Naive thymus-derived CD4-positive, alpha-beta T cell (primary cell): ENCODE measurements at regions of chr19 and their contacts with region 1.

Region 1: DNA sequence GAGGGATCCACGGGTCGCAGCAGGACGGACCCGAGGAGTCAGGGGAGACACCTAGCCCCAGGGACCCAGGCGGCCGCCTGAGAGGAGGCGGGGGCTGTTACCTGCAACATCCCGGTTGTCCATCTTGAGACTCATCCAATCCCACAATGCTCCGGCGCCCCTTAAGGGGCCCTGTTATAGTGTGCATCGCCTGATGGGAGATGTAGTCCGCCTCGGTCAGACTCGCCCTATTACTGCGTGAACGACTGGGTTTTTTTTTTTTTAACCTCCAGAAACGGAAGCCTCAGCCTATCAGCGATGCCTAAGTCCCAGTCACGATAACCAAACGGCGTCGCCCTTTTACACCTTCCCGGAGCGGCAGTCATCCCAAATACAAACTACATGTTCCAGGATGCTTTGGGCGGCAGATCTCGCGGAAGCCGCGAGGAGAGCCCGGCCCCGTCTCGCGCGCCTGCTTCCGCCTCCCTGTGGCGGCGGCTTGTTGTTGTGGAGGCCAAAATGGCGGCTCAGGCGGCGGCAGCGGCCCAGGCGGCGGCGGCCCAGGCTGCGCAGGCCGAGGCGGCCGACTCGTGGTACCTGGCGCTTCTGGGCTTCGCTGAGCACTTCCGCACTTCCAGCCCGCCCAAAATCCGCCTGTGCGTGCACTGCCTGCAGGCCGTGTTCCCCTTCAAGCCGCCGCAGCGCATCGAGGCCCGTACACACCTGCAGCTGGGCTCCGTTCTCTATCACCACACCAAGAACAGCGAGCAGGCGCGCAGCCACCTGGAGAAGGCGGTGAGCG is at the starts of genes MAU2 and SUGP1:
- DNase-seq: peak; percentile 78 to 94 (median 91)
- ATAC-seq: peak; percentile 94
- H3K4me3 ChIP-seq: peak within 1 kb of the TSS; percentile 89
- H3K4me3 Mint-ChIP-seq: peak within 1 kb of the TSS; percentile 93 to 100 (median 98)
- H3K27ac ChIP-seq: peak within 1 kb of the TSS; percentile 95
- H3K27ac Mint-ChIP-seq: peak within 1 kb of the TSS; percentile 96 to 100 (median 99)
- H3K4me1 ChIP-seq: peaks cover 23 to 30% of the 10 kb centered on the region in 2 donors
- H3K4me1 Mint-ChIP-seq: peaks cover 20 to 66% (median 44%) of the 10 kb centered on the region in 7 donors
- H3K27me3 ChIP-seq: no peaks in the 10 kb centered on the region
- H3K27me3 Mint-ChIP-seq: no peaks in the 10 kb centered on the region
- total RNA-seq, gene MAU2: 93.7 to 170 (median 136) TPM
- total RNA-seq, gene SUGP1: 59.7 to 96.6 (median 77.5) TPM

Region 2: GRCh38 chr19:19138169-19138981 is 182.2 kb before region 1 on chr19 and contains the start of gene TMEM161A:
- CTCF ChIA-PET with region 1: interaction called, 3 read pairs
- POLR2A ChIA-PET with region 1: no interaction called
- intact Hi-C with region 1: loop called (anchors 1 kb)
- DNase-seq: peak; percentile 84 to 96 (median 93)
- ATAC-seq: peak; percentile 100
- H3K4me3 ChIP-seq: peak within 1 kb of the TSS; percentile 84
- H3K4me3 Mint-ChIP-seq: peak within 1 kb of the TSS; percentile 83 to 100 (median 98)
- H3K27ac ChIP-seq: peak within 1 kb of the TSS; percentile 90
- H3K27ac Mint-ChIP-seq: peak within 1 kb of the TSS; percentile 84 to 97 (median 94)
- H3K4me1 ChIP-seq: peaks cover 8 to 9% of the 10 kb centered on the region in 2 donors
- H3K4me1 Mint-ChIP-seq: peaks cover 20 to 41% (median 29%) of the 10 kb centered on the region in 7 donors
- H3K27me3 ChIP-seq: no peaks in the 10 kb centered on the region
- H3K27me3 Mint-ChIP-seq: no peaks in the 10 kb centered on the region
- total RNA-seq, gene TMEM161A: 15.8 to 32.7 (median 23.5) TPM

Region 3: DNA sequence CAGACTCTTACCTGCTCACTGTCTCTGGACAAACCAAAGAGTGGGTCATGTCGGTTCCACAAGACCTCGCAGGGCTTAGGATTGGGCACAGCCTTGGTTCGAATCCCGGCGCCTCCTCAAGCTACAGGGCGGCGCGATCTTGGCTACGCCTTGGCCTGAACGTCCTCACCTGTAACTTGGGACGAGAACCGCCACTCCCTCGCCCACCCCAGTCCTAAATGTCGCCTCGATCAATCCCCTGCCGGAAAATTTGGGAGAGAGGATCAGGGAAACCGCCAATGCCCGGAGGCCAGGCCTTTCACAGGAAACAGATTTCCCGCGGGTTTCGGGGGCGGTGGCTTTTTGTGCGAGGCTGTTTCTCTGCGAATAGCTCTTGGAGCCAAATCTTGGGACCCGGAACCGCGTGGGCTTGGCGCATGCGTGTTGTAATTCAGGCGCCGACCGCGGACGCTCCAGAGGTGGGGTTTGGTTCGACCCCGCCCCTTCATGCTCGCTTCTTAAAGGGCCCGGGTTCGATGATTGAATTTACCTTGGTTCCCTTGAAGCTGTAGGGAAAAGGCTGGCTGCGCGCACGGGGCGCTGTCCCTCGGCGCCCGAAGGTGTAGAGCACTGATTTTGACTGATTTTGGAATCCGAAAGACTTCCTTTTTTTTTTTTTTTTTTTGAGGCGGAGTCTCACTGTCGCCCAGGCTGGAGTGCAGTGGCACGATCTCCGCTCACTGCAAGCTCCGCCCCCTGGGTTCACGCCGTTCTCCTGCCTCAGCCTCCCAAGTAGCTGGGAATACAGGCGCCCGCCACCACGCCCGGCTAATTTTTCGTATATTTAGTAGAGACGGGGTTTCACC is 117.3 kb before region 1 on chr19 and contains the start of gene NR2C2AP:
- CTCF ChIA-PET with region 1: no interaction called
- POLR2A ChIA-PET with region 1: no interaction called
- intact Hi-C with region 1: loop called (anchors 1 kb)
- DNase-seq: peak; percentile 80 to 94 (median 89)
- ATAC-seq: peak; percentile 95
- H3K4me3 ChIP-seq: peak within 1 kb of the TSS; percentile 95
- H3K4me3 Mint-ChIP-seq: peak within 1 kb of the TSS; percentile 90 to 94 (median 92)
- H3K27ac ChIP-seq: peak within 1 kb of the TSS; percentile 89
- H3K27ac Mint-ChIP-seq: peak within 1 kb of the TSS; percentile 88 to 96 (median 93)
- H3K4me1 ChIP-seq: peaks cover 23% of the 10 kb centered on the region in 2 donors
- H3K4me1 Mint-ChIP-seq: peaks cover 22 to 36% (median 30%) of the 10 kb centered on the region in 7 donors
- H3K27me3 ChIP-seq: no peaks in the 10 kb centered on the region
- H3K27me3 Mint-ChIP-seq: peaks cover 0 to 12% (median 0%) of the 10 kb centered on the region in 5 donors
- total RNA-seq, gene NR2C2AP: 13.8 to 33.4 (median 28.7) TPM

Region 4: GRCh38 chr19:19385108-19385899 is 64.8 kb after region 1 on chr19:
- CTCF ChIA-PET with region 1: no interaction called
- POLR2A ChIA-PET with region 1: no interaction called
- intact Hi-C with region 1: loop called (anchors 1 kb)
- DNase-seq: peak; percentile 95 to 100 (median 99)
- ATAC-seq: peak; percentile 93
- H3K4me3 ChIP-seq: peak overlapping the region; percentile 81
- H3K4me3 Mint-ChIP-seq: peak overlapping the region; percentile 89 to 99 (median 94)
- H3K27ac ChIP-seq: peak overlapping the region; percentile 88
- H3K27ac Mint-ChIP-seq: peak overlapping the region; percentile 25 to 96 (median 93)
- H3K4me1 ChIP-seq: peaks cover 29 to 42% of the 10 kb centered on the region in 2 donors
- H3K4me1 Mint-ChIP-seq: peaks cover 36 to 46% (median 42%) of the 10 kb centered on the region in 7 donors
- H3K27me3 ChIP-seq: no peaks in the 10 kb centered on the region
- H3K27me3 Mint-ChIP-seq: no peaks in the 10 kb centered on the region

Region 5: GRCh38 chr19:19459707-19460251 is 139.2 kb after region 1 on chr19:
- CTCF ChIA-PET with region 1: no interaction called
- POLR2A ChIA-PET with region 1: interaction called, 3 read pairs
- intact Hi-C with region 1: loop called in 1 of 2 experiments (anchors 1 kb)
- DNase-seq: peak in 8 of 9 donors; percentile 49 to 75 (median 61)
- ATAC-seq: peak; percentile 72
- H3K4me3 ChIP-seq: peak overlapping the region; percentile 55
- H3K4me3 Mint-ChIP-seq: peak overlapping the region; percentile 85 to 92 (median 91)
- H3K27ac ChIP-seq: peak overlapping the region; percentile 82
- H3K27ac Mint-ChIP-seq: peak overlapping the region; percentile 94 to 99 (median 98)
- H3K4me1 ChIP-seq: peaks cover 82% of the 10 kb centered on the region in 2 donors
- H3K4me1 Mint-ChIP-seq: peaks cover 63 to 84% (median 72%) of the 10 kb centered on the region in 7 donors
- H3K27me3 ChIP-seq: no peaks in the 10 kb centered on the region
- H3K27me3 Mint-ChIP-seq: no peaks in the 10 kb centered on the region

Region 6: DNA sequence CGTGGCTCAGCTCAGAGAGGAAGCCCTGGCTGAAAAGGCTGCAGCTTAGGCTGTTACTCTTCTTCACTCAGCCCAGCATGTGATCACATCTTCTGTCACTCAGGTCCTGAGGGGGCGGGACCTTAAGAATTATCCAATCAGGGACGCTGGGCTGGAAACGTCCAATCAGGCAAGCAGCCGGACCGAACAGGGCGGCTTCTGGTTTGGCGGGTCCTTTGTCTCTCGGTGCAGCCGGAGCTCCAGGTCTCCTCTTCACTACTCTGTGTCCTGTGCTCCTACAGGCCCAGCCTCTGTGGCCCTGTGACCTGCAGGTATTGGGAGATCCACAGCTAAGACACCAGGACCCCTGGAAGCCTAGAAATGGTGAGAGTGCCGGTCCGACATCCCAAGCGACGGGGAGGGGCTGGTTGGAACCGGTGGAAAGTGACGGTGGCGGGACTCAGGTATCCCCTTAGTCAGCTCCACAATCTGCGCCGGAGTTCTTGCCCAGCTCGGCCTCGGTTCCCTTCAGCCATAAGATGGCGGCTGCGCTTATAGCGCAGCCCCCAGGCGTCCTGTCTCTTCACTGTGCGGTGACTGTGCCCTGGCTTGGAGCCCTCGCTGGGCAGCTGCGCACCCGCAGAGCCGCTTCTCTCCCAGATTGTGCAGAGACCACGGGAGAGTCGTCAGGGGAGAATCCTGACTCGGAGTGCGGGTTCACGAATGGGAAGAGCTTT is 580.3 kb after region 1 on chr19 and contains the start of gene ZNF93:
- CTCF ChIA-PET with region 1: no interaction called
- POLR2A ChIA-PET with region 1: no interaction called
- intact Hi-C with region 1: loop called in 1 of 2 experiments (anchors 1 kb)
- DNase-seq: peak; percentile 67 to 94 (median 91)
- ATAC-seq: peak; percentile 99
- H3K4me3 ChIP-seq: peak within 1 kb of the TSS; percentile 83
- H3K4me3 Mint-ChIP-seq: peak within 1 kb of the TSS; percentile 90 to 100 (median 97)
- H3K27ac ChIP-seq: peak within 1 kb of the TSS; percentile 77
- H3K27ac Mint-ChIP-seq: peak within 1 kb of the TSS; percentile 82 to 97 (median 92)
- H3K4me1 ChIP-seq: no peaks in the 10 kb centered on the region
- H3K4me1 Mint-ChIP-seq: peaks cover 16 to 40% (median 32%) of the 10 kb centered on the region in 7 donors
- H3K27me3 ChIP-seq: no peaks in the 10 kb centered on the region
- H3K27me3 Mint-ChIP-seq: no peaks in the 10 kb centered on the region
- total RNA-seq, gene ZNF93: 3.4 to 11.6 (median 7.2) TPM